PC-3 (cell line): ENCODE measurements at regions of chr3 and their contacts with region 1.

Region 1: GRCh38 chr3:66236281-66236680 is 15.5 kb downstream of the SLC25A26 start:
- DNase-seq: peak; percentile 2
- ATAC-seq: no peak
- H3K4me3 ChIP-seq: no peak overlapping the region
- H3K27ac ChIP-seq: no peak overlapping the region
- H3K4me1 ChIP-seq: no peaks in the 10 kb centered on the region
- H3K27me3 ChIP-seq: no peaks in the 10 kb centered on the region
- CTCF ChIP-seq: peak; percentile 25; the same call in 1 of the 2 replicates

Region 2: GRCh38 chr3:64473466-64473865 is 1762.8 kb before region 1 on chr3:
- CTCF ChIA-PET with region 1: interaction called, 10 read pairs
- POLR2A ChIA-PET with region 1: no interaction called
- intact Hi-C with region 1: no loop called
- DNase-seq: no peak
- ATAC-seq: no peak
- H3K4me3 ChIP-seq: no peak overlapping the region
- H3K27ac ChIP-seq: no peak overlapping the region
- H3K4me1 ChIP-seq: no peaks in the 10 kb centered on the region
- H3K27me3 ChIP-seq: no peaks in the 10 kb centered on the region
- CTCF ChIP-seq: no peak

Region 3: DNA sequence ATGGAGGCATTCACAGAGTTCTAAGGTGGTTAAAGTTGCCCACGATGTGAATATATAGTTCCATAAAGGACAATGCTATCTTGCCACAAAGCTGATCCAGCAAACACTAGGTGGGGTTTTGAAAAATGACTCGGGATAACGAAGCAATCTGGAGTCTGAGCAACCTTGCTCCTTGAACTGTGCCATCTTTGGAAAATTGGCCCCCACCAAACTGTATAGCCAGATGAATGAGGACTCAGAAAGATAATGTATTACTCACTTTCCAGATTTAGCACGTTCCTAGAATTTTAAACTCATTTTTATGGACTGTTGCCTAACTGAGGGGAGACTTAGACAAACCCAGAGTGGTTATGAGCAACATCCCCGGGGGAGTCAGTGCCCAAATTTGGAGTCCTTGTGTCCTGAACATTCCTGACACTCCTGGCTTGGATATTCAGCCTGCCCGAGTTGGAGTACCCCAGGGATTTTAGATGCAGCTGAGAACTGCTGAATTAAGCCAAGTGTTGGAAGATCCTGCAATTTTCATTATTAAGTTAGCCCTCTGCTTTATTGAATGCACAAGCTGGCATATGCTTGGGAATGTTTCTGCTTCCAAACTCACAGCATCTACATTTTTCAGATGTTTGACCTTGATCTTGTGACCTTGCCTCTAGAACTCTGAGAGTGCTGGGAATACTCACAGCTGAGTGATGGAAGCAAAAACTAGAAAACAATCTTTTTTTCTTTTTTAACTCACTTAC is 188.8 kb before region 1 on chr3:
- CTCF ChIA-PET with region 1: no interaction called
- POLR2A ChIA-PET with region 1: no interaction called
- intact Hi-C with region 1: no loop called
- DNase-seq: no peak
- ATAC-seq: no peak
- H3K4me3 ChIP-seq: no peak overlapping the region
- H3K27ac ChIP-seq: no peak overlapping the region
- H3K4me1 ChIP-seq: peaks cover 5% of the 10 kb centered on the region; the same call in 1 of the 2 replicates
- H3K27me3 ChIP-seq: no peaks in the 10 kb centered on the region
- CTCF ChIP-seq: no peak